Activated T-helper 2 cell treated with anti-CD3 and anti-CD28 coated beads, Interferon-gamma antibody, Interleukin-2, Interleukin-4, amounts not matched to agents 10 μg/mL and 5 μg/mL and 100 μg/mL, durations not matched to agents 14 hours and 24 hours and 36 hours (primary cell): ENCODE measurements at regions of chr4 and their contacts with region 1.

Region 1: DNA sequence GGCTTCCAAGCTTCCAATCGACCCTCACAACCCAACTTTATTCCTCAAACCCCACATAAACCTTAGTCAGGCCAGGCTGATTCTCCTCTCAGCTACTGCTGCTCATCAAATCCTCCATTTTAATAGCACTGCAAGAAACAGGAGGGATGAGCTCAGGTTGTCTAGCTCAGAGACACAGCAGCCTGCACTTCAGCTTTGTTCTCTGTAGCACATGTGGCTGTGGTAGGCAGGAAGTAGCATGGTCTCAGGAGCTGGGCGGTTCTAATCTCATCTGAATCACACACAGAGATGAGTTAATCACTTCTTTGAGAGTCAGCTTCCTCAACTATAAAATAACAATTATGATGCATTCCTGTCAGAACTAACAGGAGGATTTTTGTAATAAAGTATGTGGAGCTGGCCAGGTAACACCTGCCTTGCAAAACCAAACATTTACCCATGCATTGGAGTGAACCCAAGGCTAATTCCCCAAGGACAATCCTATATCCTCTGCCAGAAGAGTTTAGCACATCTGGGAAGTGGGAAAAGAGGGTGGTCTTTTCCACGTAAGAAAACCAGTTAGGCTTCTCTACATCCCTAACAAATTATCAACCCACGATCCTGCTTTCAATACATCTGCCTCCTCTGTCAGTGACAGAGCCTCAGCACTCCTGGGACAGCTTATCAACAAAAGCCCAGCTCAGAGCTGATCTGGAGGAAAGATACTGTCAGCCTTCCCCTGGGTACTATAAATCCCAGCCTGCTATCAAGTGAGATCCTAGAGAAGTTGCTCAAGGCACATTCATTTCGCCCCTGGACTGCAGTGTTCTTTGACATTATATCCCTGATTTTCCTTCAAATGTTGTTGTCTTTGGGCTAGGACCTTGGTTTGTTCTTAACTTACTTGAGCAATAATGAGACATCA is 32.8 kb downstream of the ELOVL6 start:
- DNase-seq: peak; percentile 61
- H3K4me3 Mint-ChIP-seq: peak overlapping the region; percentile 72
- H3K27ac Mint-ChIP-seq: peak overlapping the region; percentile 100
- H3K4me1 Mint-ChIP-seq: peaks cover 35% of the 10 kb centered on the region
- H3K27me3 Mint-ChIP-seq: no peaks in the 10 kb centered on the region

Region 2: GRCh38 chr4:110055158-110055768 is 110.4 kb before region 1 on chr4:
- intact Hi-C with region 1: loop called (anchors 1 kb)
- DNase-seq: peak; percentile 16
- H3K4me3 Mint-ChIP-seq: peak overlapping the region; percentile 18
- H3K27ac Mint-ChIP-seq: peak overlapping the region; percentile 48
- H3K4me1 Mint-ChIP-seq: peaks cover 45% of the 10 kb centered on the region
- H3K27me3 Mint-ChIP-seq: no peaks in the 10 kb centered on the region

Region 3: GRCh38 chr4:110128472-110128919 is 37.1 kb before region 1 on chr4:
- intact Hi-C with region 1: loop called (anchors 1 kb)
- DNase-seq: no peak
- H3K4me3 Mint-ChIP-seq: no peak overlapping the region
- H3K27ac Mint-ChIP-seq: no peak overlapping the region
- H3K4me1 Mint-ChIP-seq: peaks cover 33% of the 10 kb centered on the region
- H3K27me3 Mint-ChIP-seq: no peaks in the 10 kb centered on the region